ENCODE measurements at regions of chr10 and their contacts with region 1.

Region 1: GRCh38 chr10:75417522-75417927 is 13.9 kb upstream of the LRMDA start:
- DNase-seq: peak in 1 of 2 donors; percentile 20
- H3K4me3 ChIP-seq: no peak overlapping the region
- H3K27ac ChIP-seq: no peak overlapping the region
- H3K4me1 ChIP-seq: no peaks in the 10 kb centered on the region
- H3K27me3 ChIP-seq: no peaks in the 10 kb centered on the region
- CTCF ChIP-seq: no peak
- EP300 ChIP-seq: no peak
- POLR2A ChIP-seq: no peak

Region 2: GRCh38 chr10:75035975-75036708 is 381.4 kb before region 1 on chr10:
- intact Hi-C with region 1: no loop called
- DNase-seq: no peak
- H3K4me3 ChIP-seq: no peak overlapping the region
- H3K27ac ChIP-seq: no peak overlapping the region
- H3K4me1 ChIP-seq: peaks cover 0 to 23% (median 6%) of the 10 kb centered on the region in 4 donors
- H3K27me3 ChIP-seq: no peaks in the 10 kb centered on the region
- CTCF ChIP-seq: no peak
- EP300 ChIP-seq: no peak
- POLR2A ChIP-seq: no peak

Region 3: DNA sequence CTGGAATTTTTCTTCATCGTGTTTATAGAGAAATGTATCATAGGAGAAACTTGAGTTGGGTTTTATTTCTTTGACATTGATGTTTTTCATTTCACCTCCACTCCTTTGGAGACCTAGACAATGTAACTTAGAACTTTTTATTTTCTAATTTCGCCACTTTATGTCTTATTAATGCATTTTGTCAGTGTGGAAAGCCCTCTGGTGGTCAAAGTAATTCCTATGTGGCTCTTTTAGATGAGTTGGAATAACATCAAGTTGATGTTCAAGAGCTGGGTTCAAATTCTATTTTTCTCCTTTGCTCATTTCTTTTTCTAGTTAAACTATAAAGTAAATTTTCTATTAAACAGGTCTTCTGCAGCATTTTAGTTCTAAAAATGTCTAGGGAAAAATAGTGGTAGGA is 492.5 kb after region 1 on chr10:
- intact Hi-C with region 1: loop called (anchors 10 kb)
- DNase-seq: peak in 1 of 2 donors; percentile 59
- H3K4me3 ChIP-seq: no peak overlapping the region
- H3K27ac ChIP-seq: no peak overlapping the region
- H3K4me1 ChIP-seq: peaks cover 0 to 11% (median 0%) of the 10 kb centered on the region in 4 donors
- H3K27me3 ChIP-seq: no peaks in the 10 kb centered on the region
- CTCF ChIP-seq: peak in 5 of 7 experiments; percentile 33 to 63 (median 58)
- EP300 ChIP-seq: no peak
- POLR2A ChIP-seq: no peak

Measured in stomach (tissue), 19 donors.